PC-3 (cell line): ENCODE measurements at regions of chrX and their contacts with region 1.

Region 1: GRCh38 chrX:124358800-124359383 is 12.5 kb downstream of the SH2D1A start:
- DNase-seq: no peak
- ATAC-seq: no peak
- H3K4me3 ChIP-seq: no peak overlapping the region
- H3K27ac ChIP-seq: no peak overlapping the region
- H3K4me1 ChIP-seq: peaks cover 15% of the 10 kb centered on the region
- H3K27me3 ChIP-seq: no peaks in the 10 kb centered on the region
- CTCF ChIP-seq: no peak

Region 2: DNA sequence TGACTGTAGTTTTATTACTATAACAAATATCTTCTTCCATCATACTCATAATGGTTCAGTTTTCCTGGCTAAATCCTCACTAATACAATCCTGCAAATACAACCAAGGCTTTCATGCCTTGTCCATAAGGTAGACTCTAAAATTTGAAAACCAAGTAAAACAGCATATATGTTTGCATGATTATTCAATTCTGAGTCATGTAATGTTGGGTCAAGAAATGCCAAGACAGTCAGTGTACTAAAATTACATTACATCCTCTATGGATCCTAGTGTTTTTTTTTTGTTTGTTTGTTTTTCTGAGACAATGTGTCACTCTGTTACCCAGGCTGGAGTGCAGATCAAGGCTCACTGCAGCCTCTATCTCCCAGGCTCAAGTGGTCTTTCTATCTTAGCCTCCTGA is 65.1 kb before region 1 on chrX:
- CTCF ChIA-PET with region 1: no interaction called
- POLR2A ChIA-PET with region 1: no interaction called
- intact Hi-C with region 1: loop called (anchors 10 kb)
- DNase-seq: peak; percentile 75
- ATAC-seq: peak; percentile 96
- H3K4me3 ChIP-seq: no peak overlapping the region
- H3K27ac ChIP-seq: peak overlapping the region; percentile 64
- H3K4me1 ChIP-seq: peaks cover 15% of the 10 kb centered on the region
- H3K27me3 ChIP-seq: no peaks in the 10 kb centered on the region
- CTCF ChIP-seq: no peak

Region 3: GRCh38 chrX:124369722-124370121 is 10.8 kb after region 1 on chrX:
- CTCF ChIA-PET with region 1: interaction called, 4 read pairs
- POLR2A ChIA-PET with region 1: no interaction called
- intact Hi-C with region 1: loop called (anchors 2 kb)
- DNase-seq: peak; percentile 7
- ATAC-seq: peak; percentile 85
- H3K4me3 ChIP-seq: no peak overlapping the region
- H3K27ac ChIP-seq: no peak overlapping the region
- H3K4me1 ChIP-seq: peaks cover 13% of the 10 kb centered on the region
- H3K27me3 ChIP-seq: no peaks in the 10 kb centered on the region
- CTCF ChIP-seq: no peak